Pancreas (tissue), 10 donors: ENCODE measurements at regions of chr7 and their contacts with region 1.

Region 1: GRCh38 chr7:341841-342638 is 52.1 kb downstream of the FOXL3 start:
- DNase-seq: peak; percentile 88 to 99 (median 98)
- ATAC-seq: peak; percentile 80 to 86 (median 83)
- H3K4me3 ChIP-seq: peak overlapping the region in 2 of 4 donors; percentile 40 to 42
- H3K27ac ChIP-seq: peak overlapping the region; percentile 84 to 93 (median 88)
- H3K4me1 ChIP-seq: peaks cover 28 to 53% (median 29%) of the 10 kb centered on the region in 3 donors
- H3K27me3 ChIP-seq: no peaks in the 10 kb centered on the region
- CTCF ChIP-seq: peak in 1 of 4 donors; percentile 30

Region 2: GRCh38 chr7:503575-504111 is 161.6 kb after region 1 on chr7:
- intact Hi-C with region 1: loop called in 1 of 3 experiments (anchors 5 kb)
- DNase-seq: peak; percentile 85 to 98 (median 96)
- ATAC-seq: peak; percentile 71 to 87 (median 82)
- H3K4me3 ChIP-seq: peak overlapping the region in 2 of 4 donors; percentile 14 to 18
- H3K27ac ChIP-seq: peak overlapping the region; percentile 92 to 95 (median 93)
- H3K4me1 ChIP-seq: peaks cover 28 to 49% (median 40%) of the 10 kb centered on the region in 3 donors
- H3K27me3 ChIP-seq: no peaks in the 10 kb centered on the region
- CTCF ChIP-seq: no peak